ENCODE measurements at regions of chr4 and their contacts with region 1.

Region 1: DNA sequence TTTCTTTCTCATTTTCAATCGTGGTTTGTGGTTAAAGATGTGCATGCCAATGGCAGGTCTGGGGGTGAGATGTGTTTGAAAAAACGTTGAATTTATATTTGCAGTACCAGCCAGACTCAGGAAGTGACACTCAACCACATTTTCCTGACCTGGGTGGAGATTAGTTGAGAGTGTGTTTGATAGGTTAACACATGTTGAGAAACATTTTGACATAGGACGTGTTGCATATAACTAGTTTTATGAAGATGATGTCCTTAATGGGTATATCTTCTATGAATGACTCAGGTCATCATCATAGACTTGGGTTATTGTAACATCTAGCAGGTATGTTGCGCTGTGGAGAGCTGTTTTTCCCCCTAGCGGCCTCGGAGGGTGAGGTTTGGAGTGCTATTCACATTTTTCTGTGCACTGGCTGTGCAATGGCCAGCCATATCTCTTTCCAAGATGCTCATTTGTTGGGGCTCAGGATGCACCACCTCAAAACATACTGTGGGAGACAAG is 21.7 kb upstream of the CD38 start:
- DNase-seq: peak; percentile 84
- H3K4me3 Mint-ChIP-seq: peak overlapping the region; percentile 79
- H3K27ac Mint-ChIP-seq: peak overlapping the region; percentile 98
- H3K4me1 Mint-ChIP-seq: peaks cover 55% of the 10 kb centered on the region
- H3K27me3 Mint-ChIP-seq: no peaks in the 10 kb centered on the region

Region 2: DNA sequence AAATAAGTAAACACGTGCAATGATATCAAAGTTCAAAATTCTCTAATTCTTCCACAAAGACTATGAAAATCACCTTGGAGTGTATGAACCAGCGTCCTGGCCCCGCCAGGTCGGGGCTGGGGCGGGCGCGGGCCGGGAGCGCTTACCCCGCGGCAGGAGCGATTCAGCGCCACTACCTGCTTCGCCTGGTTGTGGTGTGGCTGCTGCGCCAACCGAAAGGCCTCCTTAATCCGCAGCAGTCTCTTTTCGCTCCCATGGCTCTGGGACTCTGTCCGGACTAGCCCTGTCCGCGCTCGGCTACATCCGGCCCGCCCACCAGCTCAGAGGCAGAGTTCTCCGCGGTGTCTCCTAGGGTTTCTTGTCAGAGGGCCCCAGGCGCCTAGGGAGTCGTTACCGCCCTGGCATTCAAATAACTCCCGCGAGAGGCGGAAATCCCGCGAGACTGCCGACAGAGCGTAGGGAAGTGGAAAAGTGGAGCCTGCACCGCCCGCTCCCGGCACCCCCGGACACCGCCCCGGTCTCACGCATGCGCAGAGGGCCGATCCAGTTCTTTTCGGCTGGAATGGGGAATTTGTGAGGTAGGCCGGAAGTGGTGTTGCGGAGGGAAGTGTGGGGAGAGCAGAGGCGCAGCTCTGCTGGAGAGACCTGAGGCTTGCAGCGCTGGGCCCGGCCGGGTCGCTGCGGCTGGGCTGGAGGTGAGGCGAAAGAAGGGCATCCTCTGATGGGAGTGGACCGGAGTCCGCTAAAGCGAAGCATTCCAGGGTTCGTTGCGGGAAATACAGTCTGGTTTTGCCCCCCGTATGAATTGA is 75.0 kb before region 1 on chr4 and contains the start of gene FAM200B:
- CTCF ChIA-PET with region 1: interaction called, 8 read pairs
- POLR2A ChIA-PET with region 1: interaction called, 24 read pairs
- DNase-seq: peak; percentile 98
- H3K4me3 Mint-ChIP-seq: peak within 1 kb of the TSS; percentile 97
- H3K27ac Mint-ChIP-seq: peak within 1 kb of the TSS; percentile 92
- H3K4me1 Mint-ChIP-seq: peaks cover 46% of the 10 kb centered on the region
- H3K27me3 Mint-ChIP-seq: no peaks in the 10 kb centered on the region
- total RNA-seq, gene FAM200B: 15.8 to 16.0 TPM

Region 3: DNA sequence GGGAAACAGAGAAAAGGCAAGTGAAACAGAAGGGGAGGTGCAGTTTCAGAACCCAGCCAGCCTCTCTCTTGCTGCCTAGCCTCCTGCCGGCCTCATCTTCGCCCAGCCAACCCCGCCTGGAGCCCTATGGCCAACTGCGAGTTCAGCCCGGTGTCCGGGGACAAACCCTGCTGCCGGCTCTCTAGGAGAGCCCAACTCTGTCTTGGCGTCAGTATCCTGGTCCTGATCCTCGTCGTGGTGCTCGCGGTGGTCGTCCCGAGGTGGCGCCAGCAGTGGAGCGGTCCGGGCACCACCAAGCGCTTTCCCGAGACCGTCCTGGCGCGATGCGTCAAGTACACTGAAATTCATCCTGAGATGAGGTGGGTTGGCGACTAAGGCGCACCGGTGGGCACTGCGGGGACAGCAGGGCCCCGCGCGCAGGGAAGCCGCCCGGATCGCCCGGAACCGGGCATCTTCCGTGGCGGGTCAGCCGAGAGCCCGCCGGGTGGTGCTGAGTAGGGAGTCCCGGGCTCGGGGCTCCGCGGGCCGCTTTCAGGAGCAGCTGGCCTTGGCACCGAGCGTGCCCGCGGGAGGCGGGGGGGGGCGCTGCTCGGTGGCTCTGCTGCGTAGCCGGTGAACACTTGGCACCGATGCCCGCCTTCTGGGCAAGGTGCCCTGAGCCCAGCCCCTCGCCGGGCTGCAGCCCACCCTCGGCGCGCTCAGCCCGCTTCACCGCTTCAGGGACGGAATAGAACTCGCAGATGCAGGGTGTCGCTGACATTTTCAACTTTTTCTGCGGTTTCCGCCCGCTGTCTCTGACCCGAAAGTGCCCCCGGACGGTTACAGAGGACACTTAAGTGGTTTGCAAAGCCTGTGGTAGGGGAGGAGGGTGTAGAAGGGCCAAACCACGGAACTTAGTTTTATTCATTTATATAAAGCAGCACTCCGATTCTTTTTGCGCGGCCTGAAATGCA is 22.2 kb after region 1 on chr4 and contains the start of gene CD38:
- CTCF ChIA-PET with region 1: interaction called, 69 read pairs
- POLR2A ChIA-PET with region 1: interaction called, 224 read pairs
- DNase-seq: peak; percentile 79
- H3K4me3 Mint-ChIP-seq: peak within 1 kb of the TSS; percentile 84
- H3K27ac Mint-ChIP-seq: peak within 1 kb of the TSS; percentile 81
- H3K4me1 Mint-ChIP-seq: peaks cover 72% of the 10 kb centered on the region
- H3K27me3 Mint-ChIP-seq: peaks cover 20% of the 10 kb centered on the region
- total RNA-seq, gene CD38: 128 TPM

Region 4: DNA sequence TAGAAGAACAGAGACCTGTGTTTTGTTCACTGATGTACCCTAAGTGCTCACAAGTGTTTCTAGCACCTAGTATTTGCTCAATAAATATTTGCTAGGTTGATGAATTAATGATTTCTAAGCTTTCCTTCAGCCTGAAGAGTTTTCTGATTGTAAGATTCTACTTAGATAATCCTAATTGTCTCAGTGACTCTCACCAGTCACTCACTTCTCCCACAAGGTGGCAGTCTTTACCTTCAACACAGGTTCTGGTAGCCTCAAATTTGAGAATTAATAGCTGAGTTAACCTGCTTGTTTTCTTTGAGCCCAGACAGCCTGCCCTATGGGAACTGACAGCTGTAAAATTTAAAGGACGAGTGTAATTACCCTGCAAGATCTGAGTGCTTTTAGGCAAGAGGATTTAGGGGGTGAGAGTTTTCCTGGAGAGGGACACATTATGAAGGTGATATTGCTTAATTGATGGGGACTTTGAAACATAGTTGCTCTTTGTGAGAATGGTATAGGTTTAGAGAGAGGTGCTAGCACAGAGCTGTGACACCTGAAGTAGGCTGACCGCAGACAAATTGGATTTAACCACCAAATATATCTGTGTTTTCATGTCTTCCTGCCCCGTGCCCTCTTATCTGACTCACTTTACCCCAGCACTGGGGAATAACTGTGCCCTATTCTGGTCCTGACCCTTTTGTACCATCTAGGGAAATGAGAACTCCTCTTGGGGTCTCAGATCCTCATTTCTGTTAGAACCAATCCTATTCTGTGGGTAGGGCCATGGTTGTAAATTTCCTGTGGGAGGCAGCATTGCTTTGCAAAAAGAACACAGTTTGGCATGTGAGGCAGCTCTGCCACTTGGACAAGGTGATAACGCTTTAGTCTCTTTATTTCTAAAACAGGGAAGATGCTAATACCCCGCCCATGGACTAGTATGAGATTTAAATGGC is 49.4 kb after region 1 on chr4:
- CTCF ChIA-PET with region 1: interaction called, 21 read pairs
- POLR2A ChIA-PET with region 1: no interaction called
- DNase-seq: peak; percentile 35
- H3K4me3 Mint-ChIP-seq: no peak overlapping the region
- H3K27ac Mint-ChIP-seq: no peak overlapping the region
- H3K4me1 Mint-ChIP-seq: peaks cover 52% of the 10 kb centered on the region
- H3K27me3 Mint-ChIP-seq: no peaks in the 10 kb centered on the region